Panc1 (cell line): ENCODE measurements at regions of chr6 and their contacts with region 1.

Region 1: DNA sequence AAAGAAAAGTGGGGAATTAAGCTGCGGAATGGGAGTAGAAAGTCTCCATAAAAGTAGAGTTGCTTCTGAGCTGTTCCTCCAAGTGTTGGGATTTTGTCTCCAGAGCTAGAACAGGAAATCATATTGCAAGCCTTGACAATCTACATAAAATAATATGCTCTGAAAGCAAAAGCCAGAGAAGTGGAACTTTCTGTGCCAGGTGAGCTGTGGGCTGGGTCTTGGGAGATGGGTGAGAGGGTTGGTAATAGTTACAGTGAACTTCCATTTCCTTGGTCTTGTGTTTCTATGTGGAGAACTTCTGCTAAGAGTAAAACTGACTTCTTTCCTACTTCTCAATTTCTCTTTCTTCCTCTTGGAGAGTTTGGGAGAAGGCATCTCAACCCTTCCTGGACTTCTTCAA is 6.3 kb upstream of the HMGN4 start:
- DNase-seq: no peak
- ATAC-seq: no peak
- H3K4me3 ChIP-seq: no peak overlapping the region
- H3K27ac ChIP-seq: no peak overlapping the region
- H3K4me1 ChIP-seq: peaks cover 27% of the 10 kb centered on the region
- H3K27me3 ChIP-seq: no peaks in the 10 kb centered on the region
- CTCF ChIP-seq: no peak

Region 2: GRCh38 chr6:26553635-26554446 is 21.9 kb after region 1 on chr6:
- CTCF ChIA-PET with region 1: interaction called, 14 read pairs
- POLR2A ChIA-PET with region 1: no interaction called
- in situ Hi-C with region 1: no loop called
- intact Hi-C with region 1: no loop called
- DNase-seq: peak; percentile 97
- ATAC-seq: peak; percentile 57
- H3K4me3 ChIP-seq: peak overlapping the region; percentile 77 to 96
- H3K27ac ChIP-seq: peak overlapping the region; percentile 73
- H3K4me1 ChIP-seq: peaks cover 23% of the 10 kb centered on the region
- H3K27me3 ChIP-seq: no peaks in the 10 kb centered on the region
- CTCF ChIP-seq: no peak